Calu3 (cell line): ENCODE measurements at regions of chr10 and their contacts with region 1.

Region 1: GRCh38 chr10:72097448-72098300 is 9.3 kb upstream of the SPOCK2 start:
- DNase-seq: peak; percentile 81
- H3K4me3 Mint-ChIP-seq: peak overlapping the region; percentile 44
- H3K27ac Mint-ChIP-seq: peak overlapping the region; percentile 97
- H3K4me1 Mint-ChIP-seq: peaks cover 65% of the 10 kb centered on the region
- H3K27me3 Mint-ChIP-seq: no peaks in the 10 kb centered on the region
- CTCF ChIP-seq: no peak

Region 2: GRCh38 chr10:72081773-72082590 is 15.7 kb before region 1 on chr10:
- CTCF ChIA-PET with region 1: interaction called, 4 read pairs
- intact Hi-C with region 1: loop called (anchors 1 kb)
- DNase-seq: peak; percentile 96
- H3K4me3 Mint-ChIP-seq: peak overlapping the region; percentile 34
- H3K27ac Mint-ChIP-seq: peak overlapping the region; percentile 97
- H3K4me1 Mint-ChIP-seq: peaks cover 79% of the 10 kb centered on the region
- H3K27me3 Mint-ChIP-seq: no peaks in the 10 kb centered on the region
- CTCF ChIP-seq: no peak

Region 3: DNA sequence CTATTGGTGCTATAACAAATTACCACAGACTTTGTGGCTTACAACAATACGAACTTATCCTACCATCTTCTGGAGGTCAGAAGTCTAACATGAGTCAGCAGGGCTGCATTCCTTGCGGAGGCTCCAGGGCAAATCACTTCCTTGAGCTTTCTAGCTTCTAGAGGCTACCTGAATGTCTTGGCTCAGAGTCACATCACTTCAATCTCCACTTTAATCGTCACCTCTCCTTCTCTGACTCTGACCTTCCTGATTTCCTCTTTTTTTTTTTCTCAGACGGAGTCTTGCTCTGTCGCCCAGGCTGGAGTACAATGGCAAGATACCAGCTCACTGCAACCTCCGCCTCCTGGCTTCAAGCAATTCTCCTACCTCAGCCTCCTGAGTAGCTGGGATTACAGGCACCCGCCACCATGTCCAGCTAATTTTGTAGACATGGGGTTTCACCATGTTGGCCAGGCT is 73.5 kb after region 1 on chr10:
- CTCF ChIA-PET with region 1: interaction called, 6 read pairs
- intact Hi-C with region 1: loop called (anchors 2 kb)
- DNase-seq: peak; percentile 86
- H3K4me3 Mint-ChIP-seq: peak overlapping the region; percentile 25
- H3K27ac Mint-ChIP-seq: peak overlapping the region; percentile 83
- H3K4me1 Mint-ChIP-seq: peaks cover 37% of the 10 kb centered on the region
- H3K27me3 Mint-ChIP-seq: no peaks in the 10 kb centered on the region
- CTCF ChIP-seq: no peak